Caco-2 (cell line): ENCODE measurements at regions of chr5 and their contacts with region 1.

Region 1: GRCh38 chr5:55601204-55601618 is 66.4 kb upstream of the PLPP1 start:
- DNase-seq: peak; percentile 85 to 92
- H3K4me3 ChIP-seq: no peak overlapping the region
- H3K4me3 Mint-ChIP-seq: peak overlapping the region; percentile 68
- H3K27ac Mint-ChIP-seq: peak overlapping the region; percentile 98
- H3K4me1 ChIP-seq: peaks cover 59% of the 10 kb centered on the region
- H3K4me1 Mint-ChIP-seq: peaks cover 30% of the 10 kb centered on the region
- H3K27me3 ChIP-seq: no peaks in the 10 kb centered on the region
- H3K27me3 Mint-ChIP-seq: no peaks in the 10 kb centered on the region
- CTCF ChIP-seq: no peak

Region 2: GRCh38 chr5:55418994-55419968 is 181.9 kb before region 1 on chr5:
- CTCF ChIA-PET with region 1: no interaction called
- POLR2A ChIA-PET with region 1: no interaction called
- intact Hi-C with region 1: loop called (anchors 1 kb)
- DNase-seq: peak; percentile 47 to 59
- H3K4me3 ChIP-seq: no peak overlapping the region
- H3K4me3 Mint-ChIP-seq: peak overlapping the region; percentile 2
- H3K27ac Mint-ChIP-seq: peak overlapping the region; percentile 58
- H3K4me1 ChIP-seq: peaks cover 26% of the 10 kb centered on the region
- H3K4me1 Mint-ChIP-seq: peaks cover 33% of the 10 kb centered on the region
- H3K27me3 ChIP-seq: no peaks in the 10 kb centered on the region
- H3K27me3 Mint-ChIP-seq: no peaks in the 10 kb centered on the region
- CTCF ChIP-seq: no peak

Region 3: GRCh38 chr5:55534436-55535198 is 66.6 kb before region 1 on chr5 and contains the start of gene PLPP1:
- CTCF ChIA-PET with region 1: no interaction called
- POLR2A ChIA-PET with region 1: no interaction called
- intact Hi-C with region 1: loop called (anchors 2 kb)
- DNase-seq: peak; percentile 90 to 95
- H3K4me3 ChIP-seq: peak within 1 kb of the TSS; percentile 98
- H3K4me3 Mint-ChIP-seq: peak within 1 kb of the TSS; percentile 78
- H3K27ac Mint-ChIP-seq: peak within 1 kb of the TSS; percentile 78
- H3K4me1 ChIP-seq: peaks cover 8% of the 10 kb centered on the region
- H3K4me1 Mint-ChIP-seq: peaks cover 21% of the 10 kb centered on the region
- H3K27me3 ChIP-seq: no peaks in the 10 kb centered on the region
- H3K27me3 Mint-ChIP-seq: no peaks in the 10 kb centered on the region
- CTCF ChIP-seq: peak in 1 of 2 experiments; percentile 0
- total RNA-seq, gene PLPP1: 49.4 and 57.9 TPM in 2 replicates

Region 4: DNA sequence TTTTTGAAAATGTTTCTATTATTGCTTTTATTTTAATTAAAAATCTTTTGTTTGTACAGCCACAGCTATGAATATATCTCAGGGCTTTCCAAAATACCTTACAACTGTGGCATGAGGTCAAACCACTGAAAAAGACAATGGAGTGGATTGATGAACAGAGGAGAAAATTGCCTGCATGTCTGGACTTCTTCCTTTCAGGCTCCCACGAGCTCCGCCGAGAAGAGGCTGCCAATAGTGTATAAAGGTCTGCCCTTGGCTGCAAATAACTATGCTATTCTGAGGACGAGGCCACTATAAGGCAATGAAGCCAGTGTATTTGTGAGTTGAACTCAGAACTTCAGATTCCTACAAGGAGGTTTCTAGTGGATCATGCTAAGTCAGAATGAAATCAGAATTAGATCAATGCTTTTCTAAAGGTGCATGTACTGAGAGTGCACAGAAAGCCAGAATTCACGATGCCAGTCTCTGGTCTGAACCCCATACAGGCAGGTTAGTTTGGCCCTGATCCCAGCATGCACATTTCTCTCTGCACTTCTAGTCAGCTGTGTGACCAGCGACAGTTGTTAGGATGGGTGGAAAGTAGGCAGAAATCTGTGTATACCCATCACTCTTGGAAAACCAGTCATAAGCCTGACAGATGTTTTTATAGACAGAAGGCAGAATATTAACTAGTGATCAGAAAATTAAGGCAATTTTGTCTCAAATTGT is 23.7 kb before region 1 on chr5:
- CTCF ChIA-PET with region 1: no interaction called
- POLR2A ChIA-PET with region 1: no interaction called
- intact Hi-C with region 1: loop called (anchors 1 kb)
- DNase-seq: no peak
- H3K4me3 ChIP-seq: no peak overlapping the region
- H3K4me3 Mint-ChIP-seq: no peak overlapping the region
- H3K27ac Mint-ChIP-seq: peak overlapping the region; percentile 23
- H3K4me1 ChIP-seq: peaks cover 49% of the 10 kb centered on the region
- H3K4me1 Mint-ChIP-seq: peaks cover 28% of the 10 kb centered on the region
- H3K27me3 ChIP-seq: no peaks in the 10 kb centered on the region
- H3K27me3 Mint-ChIP-seq: no peaks in the 10 kb centered on the region
- CTCF ChIP-seq: no peak

Region 5: GRCh38 chr5:55621229-55621628 is 20.0 kb after region 1 on chr5:
- CTCF ChIA-PET with region 1: no interaction called
- POLR2A ChIA-PET with region 1: no interaction called
- intact Hi-C with region 1: loop called (anchors 1 kb)
- DNase-seq: no peak
- H3K4me3 ChIP-seq: no peak overlapping the region
- H3K4me3 Mint-ChIP-seq: no peak overlapping the region
- H3K27ac Mint-ChIP-seq: no peak overlapping the region
- H3K4me1 ChIP-seq: peaks cover 43% of the 10 kb centered on the region
- H3K4me1 Mint-ChIP-seq: peaks cover 44% of the 10 kb centered on the region
- H3K27me3 ChIP-seq: no peaks in the 10 kb centered on the region
- H3K27me3 Mint-ChIP-seq: no peaks in the 10 kb centered on the region
- CTCF ChIP-seq: no peak

Region 6: GRCh38 chr5:55724281-55724680 is 123.1 kb after region 1 on chr5:
- CTCF ChIA-PET with region 1: no interaction called
- POLR2A ChIA-PET with region 1: no interaction called
- intact Hi-C with region 1: no loop called
- DNase-seq: no peak
- H3K4me3 ChIP-seq: no peak overlapping the region
- H3K4me3 Mint-ChIP-seq: no peak overlapping the region
- H3K27ac Mint-ChIP-seq: no peak overlapping the region
- H3K4me1 ChIP-seq: no peaks in the 10 kb centered on the region
- H3K4me1 Mint-ChIP-seq: no peaks in the 10 kb centered on the region
- H3K27me3 ChIP-seq: no peaks in the 10 kb centered on the region
- H3K27me3 Mint-ChIP-seq: no peaks in the 10 kb centered on the region
- CTCF ChIP-seq: no peak

Region 7: DNA sequence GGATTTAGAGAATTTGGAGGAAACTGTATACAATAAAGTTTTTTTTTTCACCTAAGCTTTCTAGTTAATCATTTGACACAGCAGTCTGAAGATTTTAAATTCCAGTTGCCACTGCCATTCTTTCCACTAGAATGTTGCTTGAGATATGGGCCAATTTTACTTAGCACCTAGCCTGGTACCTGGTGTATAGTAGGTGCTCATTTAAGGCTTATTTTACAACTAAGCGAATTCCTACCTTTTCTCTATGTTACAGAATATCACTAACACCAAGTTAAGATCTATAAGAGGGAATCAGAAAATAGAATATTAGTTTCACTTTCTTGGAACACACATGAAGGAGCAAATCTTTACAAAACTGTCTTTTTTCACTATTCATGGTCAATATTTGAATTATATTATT is 133.4 kb after region 1 on chr5:
- CTCF ChIA-PET with region 1: no interaction called
- POLR2A ChIA-PET with region 1: no interaction called
- intact Hi-C with region 1: no loop called
- DNase-seq: no peak
- H3K4me3 ChIP-seq: no peak overlapping the region
- H3K4me3 Mint-ChIP-seq: no peak overlapping the region
- H3K27ac Mint-ChIP-seq: no peak overlapping the region
- H3K4me1 ChIP-seq: no peaks in the 10 kb centered on the region
- H3K4me1 Mint-ChIP-seq: no peaks in the 10 kb centered on the region
- H3K27me3 ChIP-seq: no peaks in the 10 kb centered on the region
- H3K27me3 Mint-ChIP-seq: no peaks in the 10 kb centered on the region
- CTCF ChIP-seq: no peak